T-cell (primary cell): ENCODE measurements at regions of chr4 and their contacts with region 1.

Region 1: DNA sequence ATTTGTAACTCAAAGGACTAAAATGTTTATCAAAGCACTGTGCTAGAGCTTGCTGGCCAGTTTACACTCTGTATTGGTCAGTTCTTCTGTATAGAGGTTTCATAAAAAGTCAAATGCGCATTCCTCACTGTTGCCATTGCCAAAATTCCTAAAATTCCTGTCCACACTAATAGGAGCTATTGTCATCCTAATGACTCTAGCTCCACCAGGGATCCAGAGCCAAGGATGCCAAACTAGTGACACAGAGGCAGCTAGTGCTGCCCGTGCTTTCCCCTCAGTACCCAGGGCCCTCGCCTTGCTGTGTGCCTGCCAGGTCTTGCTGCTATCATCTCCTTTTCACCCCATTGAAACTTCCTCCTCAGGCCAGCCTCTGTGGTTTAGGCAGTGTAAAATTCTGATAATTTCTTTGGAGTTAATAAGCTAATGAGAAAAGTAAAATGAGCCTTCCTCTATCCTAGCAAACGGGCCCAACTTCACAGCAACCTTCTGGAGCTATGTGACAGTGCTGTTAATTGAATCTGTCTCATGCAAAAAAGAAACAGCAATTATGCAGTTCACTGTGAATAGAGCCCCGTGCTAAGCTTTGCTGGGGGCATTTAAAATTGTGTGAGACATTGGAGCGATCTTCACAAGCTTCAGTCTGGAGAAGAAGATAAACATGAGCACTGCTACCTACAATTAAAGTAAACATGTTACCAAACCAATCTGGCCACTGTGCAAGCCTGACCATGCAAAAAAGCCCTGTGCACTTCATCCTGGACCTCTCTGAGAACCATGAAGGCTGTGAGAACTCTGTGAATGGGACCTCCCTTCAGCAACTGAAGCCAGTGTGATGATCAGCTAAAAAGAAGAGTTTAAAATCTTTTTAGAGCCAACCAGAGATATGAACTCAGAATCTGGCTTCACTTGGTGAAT is 43.1 kb upstream of the FGF2 start:
- DNase-seq: no peak
- ATAC-seq: no peak
- H3K4me3 ChIP-seq: no peak overlapping the region
- H3K4me3 Mint-ChIP-seq: no peak overlapping the region
- H3K27ac ChIP-seq: no peak overlapping the region
- H3K27ac Mint-ChIP-seq: no peak overlapping the region
- H3K4me1 ChIP-seq: no peaks in the 10 kb centered on the region
- H3K4me1 Mint-ChIP-seq: peaks cover 0 to 9% (median 0%) of the 10 kb centered on the region in 3 donors
- H3K27me3 ChIP-seq: no peaks in the 10 kb centered on the region
- H3K27me3 Mint-ChIP-seq: peaks cover 7 to 11% of the 10 kb centered on the region in 2 donors

Region 2: DNA sequence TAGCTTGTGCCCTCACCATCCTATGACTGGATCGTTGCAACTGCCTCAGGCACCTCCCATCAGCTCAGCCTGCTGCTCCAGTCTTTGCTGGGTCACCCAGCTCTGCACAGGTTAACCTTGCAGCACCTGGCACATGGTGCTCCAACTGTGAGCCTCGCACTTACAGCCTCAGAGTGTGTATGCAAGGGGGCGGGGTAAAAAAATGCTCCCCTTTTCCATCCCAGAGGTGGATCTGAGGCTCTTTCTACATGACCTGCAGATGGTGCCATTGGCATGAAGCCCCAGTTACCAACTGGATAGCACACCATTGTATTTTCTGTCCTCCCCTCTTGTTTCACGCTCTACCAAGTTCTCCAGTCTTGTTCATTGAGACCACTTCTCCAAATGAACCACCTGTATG is 785.6 kb before region 1 on chr4:
- CTCF ChIA-PET with region 1: no interaction called
- POLR2A ChIA-PET with region 1: interaction called in 1 of 2 experiments, 11 read pairs
- DNase-seq: peak in 1 of 35 experiments; percentile 15
- ATAC-seq: no peak
- H3K4me3 ChIP-seq: no peak overlapping the region
- H3K4me3 Mint-ChIP-seq: no peak overlapping the region
- H3K27ac ChIP-seq: no peak overlapping the region
- H3K27ac Mint-ChIP-seq: no peak overlapping the region
- H3K4me1 ChIP-seq: no peaks in the 10 kb centered on the region
- H3K4me1 Mint-ChIP-seq: no peaks in the 10 kb centered on the region
- H3K27me3 ChIP-seq: peaks cover 3 to 9% of the 10 kb centered on the region in 2 experiments
- H3K27me3 Mint-ChIP-seq: peaks cover 20 to 32% of the 10 kb centered on the region in 2 donors

Region 3: GRCh38 chr4:122803788-122804208 is 20.2 kb after region 1 on chr4:
- CTCF ChIA-PET with region 1: no interaction called
- POLR2A ChIA-PET with region 1: no interaction called
- DNase-seq: no peak
- ATAC-seq: no peak
- H3K4me3 ChIP-seq: no peak overlapping the region
- H3K4me3 Mint-ChIP-seq: no peak overlapping the region
- H3K27ac ChIP-seq: no peak overlapping the region
- H3K27ac Mint-ChIP-seq: no peak overlapping the region
- H3K4me1 ChIP-seq: no peaks in the 10 kb centered on the region
- H3K4me1 Mint-ChIP-seq: no peaks in the 10 kb centered on the region
- H3K27me3 ChIP-seq: peaks cover 0 to 2% of the 10 kb centered on the region in 2 experiments
- H3K27me3 Mint-ChIP-seq: peaks cover 0 to 2% of the 10 kb centered on the region in 2 donors

Region 4: DNA sequence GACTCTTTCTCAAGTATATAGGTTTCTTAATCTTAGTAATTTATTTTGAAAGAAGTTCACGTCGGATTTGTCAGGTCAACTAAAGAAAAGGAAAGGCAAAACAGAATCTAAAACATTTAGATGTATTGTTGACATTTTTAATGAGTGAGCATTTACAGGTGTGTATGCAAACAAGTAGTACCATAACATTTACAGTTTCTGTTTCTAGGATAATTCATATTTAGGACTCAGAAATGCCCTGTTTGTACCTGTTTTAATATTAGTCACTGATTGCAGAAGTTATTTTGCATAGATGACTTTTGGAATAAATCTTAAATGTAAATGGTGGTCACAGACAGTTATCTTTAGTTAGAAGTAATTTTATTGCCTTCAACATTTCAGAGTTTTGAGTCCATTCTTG is 290.1 kb after region 1 on chr4:
- CTCF ChIA-PET with region 1: no interaction called
- POLR2A ChIA-PET with region 1: no interaction called
- DNase-seq: no peak
- ATAC-seq: no peak
- H3K4me3 ChIP-seq: no peak overlapping the region
- H3K4me3 Mint-ChIP-seq: no peak overlapping the region
- H3K27ac ChIP-seq: no peak overlapping the region
- H3K27ac Mint-ChIP-seq: no peak overlapping the region
- H3K4me1 ChIP-seq: no peaks in the 10 kb centered on the region
- H3K4me1 Mint-ChIP-seq: no peaks in the 10 kb centered on the region
- H3K27me3 ChIP-seq: no peaks in the 10 kb centered on the region
- H3K27me3 Mint-ChIP-seq: no peaks in the 10 kb centered on the region